ENCODE measurements at regions of chr21 and their contacts with region 1.

Region 1: DNA sequence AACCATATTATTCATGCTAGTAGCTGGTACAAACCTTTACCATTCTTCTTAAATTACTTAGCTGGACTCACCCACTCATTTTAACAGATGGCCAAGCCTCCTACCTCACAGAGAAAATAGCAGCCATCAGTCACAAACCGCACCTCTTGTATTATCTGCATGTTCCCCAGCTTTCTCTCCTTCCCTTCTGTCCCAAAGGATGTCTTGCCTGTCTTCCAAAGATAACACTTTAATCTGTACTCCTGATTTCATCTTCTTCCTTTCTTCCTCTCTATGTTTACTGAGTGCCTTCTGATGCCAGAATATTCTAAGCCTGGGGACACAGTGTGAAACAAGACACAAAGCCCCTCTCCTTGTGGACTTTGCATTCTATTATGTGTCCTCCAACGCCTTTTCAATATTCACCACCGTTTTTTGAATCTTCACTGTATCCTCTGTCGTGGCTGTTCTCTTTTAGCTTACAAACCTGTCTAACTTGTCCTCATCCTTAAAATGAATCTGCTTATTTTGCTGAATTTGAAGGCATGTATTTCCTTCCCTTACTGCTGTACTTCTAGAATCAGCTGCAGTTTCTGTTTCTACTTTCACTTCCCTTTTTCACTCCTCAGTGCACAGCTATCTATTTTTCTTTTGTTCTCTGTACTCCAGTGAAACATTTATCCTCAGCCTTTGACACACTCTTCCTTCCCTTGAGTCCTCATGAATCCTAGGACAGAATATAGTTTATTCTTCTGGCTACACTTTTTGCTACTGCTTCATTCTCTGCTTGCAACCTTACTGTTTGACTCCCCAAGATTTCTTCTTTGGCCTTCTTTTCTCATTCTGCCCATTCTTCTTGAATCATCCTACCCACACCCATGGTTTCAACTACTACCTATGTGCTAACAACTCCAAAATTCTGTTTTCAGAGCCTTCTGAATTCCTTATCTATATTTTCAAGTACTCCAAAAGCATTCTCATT is 216.9 kb upstream of the SAMSN1 start:
- DNase-seq: no peak

Region 2: DNA sequence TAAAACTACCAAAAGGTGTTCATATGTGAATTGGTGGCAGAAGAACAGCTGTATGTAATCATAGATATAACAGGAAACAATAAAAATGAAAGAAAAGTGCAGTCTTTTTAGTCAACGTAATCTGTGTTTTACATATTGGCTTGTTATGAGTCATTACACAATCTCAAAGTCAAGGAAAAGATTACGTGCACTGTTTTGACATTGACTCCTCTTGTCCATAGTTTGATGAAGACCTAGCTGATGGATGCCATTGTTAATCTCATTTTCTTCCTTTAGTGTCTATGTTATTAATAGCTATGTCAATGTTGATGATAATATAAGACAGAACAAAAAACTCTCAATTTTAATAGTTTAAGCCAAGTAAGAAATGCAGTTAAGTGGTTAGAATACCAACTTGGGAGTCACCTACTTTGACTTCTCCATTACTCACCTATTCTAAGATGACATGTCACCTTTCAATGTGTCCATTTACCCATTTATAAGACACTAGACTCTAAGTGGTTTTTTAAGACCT is 132.4 kb before region 1 on chr21:
- intact Hi-C with region 1: no loop called
- DNase-seq: no peak

Region 3: DNA sequence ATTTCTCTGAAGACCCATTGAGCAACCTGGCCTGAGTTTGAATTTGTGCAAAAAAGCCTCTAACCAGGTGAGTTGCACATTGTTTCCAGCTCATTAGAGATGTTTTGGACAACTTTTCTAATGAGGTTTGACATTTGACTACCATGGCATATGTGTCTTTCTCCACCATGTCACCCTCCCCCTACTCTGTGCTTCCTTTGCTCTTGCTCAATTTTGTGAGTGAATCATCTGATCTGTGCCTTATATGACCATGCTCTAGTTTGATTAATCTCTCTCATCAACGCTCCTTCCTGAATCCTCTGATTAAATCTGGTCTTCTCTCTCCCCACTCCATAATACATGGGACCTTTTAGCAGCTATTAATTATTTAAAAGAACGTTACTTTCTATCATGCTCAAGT is 72.1 kb before region 1 on chr21:
- intact Hi-C with region 1: no loop called
- DNase-seq: no peak

Region 4: DNA sequence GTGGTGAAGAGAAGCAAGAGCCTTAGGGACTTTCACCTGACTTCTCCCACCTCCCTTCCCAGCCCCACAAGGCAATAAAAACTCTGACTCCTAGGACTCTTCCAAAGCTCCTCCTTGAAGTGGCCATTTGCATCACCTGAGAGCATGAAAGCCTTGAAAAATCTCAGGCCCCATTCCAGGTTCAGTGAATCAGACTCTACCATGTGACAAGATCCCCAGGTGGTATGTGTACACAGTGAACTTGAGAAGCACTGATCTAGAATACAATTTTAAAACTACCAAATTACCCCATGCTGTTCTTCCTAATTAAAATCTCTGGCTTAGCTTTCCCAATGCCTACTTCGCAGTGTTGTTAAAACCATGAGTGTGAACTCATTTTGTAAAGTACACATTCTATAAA is 21.8 kb before region 1 on chr21:
- intact Hi-C with region 1: loop called in 1 of 2 experiments (anchors 2 kb)
- DNase-seq: no peak

Region 5: GRCh38 chr21:14825514-14825974 is 62.5 kb after region 1 on chr21:
- intact Hi-C with region 1: no loop called
- DNase-seq: no peak

Measured in posterior vena cava (tissue), 2 donors.